A549 (cell line): ENCODE measurements at regions of chr9 and their contacts with region 1.

Region 1: GRCh38 chr9:123349691-123350480 is 6.1 kb upstream of the CRB2 start:
- DNase-seq: peak; percentile 52 to 88
- ATAC-seq: peak; percentile 60 to 82
- H3K4me3 ChIP-seq: no peak overlapping the region
- H3K27ac ChIP-seq: no peak overlapping the region
- H3K4me1 ChIP-seq: peaks cover 3% of the 10 kb centered on the region; the same call in 2 of the 3 replicates
- CTCF ChIP-seq: peak; percentile 92
- EP300 ChIP-seq: no peak
- POLR2A ChIP-seq: no peak
- RAD21 ChIP-seq: peak; percentile 96 to 99

Region 2: DNA sequence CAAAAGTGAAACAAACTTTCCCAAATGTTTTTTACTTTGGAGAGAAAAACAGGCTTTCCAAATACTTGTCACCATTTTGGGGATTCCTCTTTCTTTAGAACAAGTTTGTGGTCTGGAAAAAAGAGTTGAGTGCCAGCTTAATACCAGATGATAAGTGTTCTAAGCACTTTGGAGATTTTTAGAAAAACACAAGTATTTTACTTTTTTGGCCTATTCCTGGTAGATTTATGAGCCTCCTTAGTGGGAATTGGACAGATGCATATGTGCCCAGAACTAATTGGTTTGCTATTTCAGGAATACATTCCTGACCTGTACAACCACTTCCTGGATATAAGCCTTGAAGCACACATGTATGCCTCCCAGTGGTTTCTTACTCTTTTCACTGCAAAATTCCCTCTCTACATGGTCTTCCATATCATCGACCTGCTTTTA is 275.9 kb before region 1 on chr9:
- CTCF ChIA-PET with region 1: interaction called, 120 read pairs
- POLR2A ChIA-PET with region 1: no interaction called
- DNase-seq: no peak
- ATAC-seq: no peak
- H3K4me3 ChIP-seq: no peak overlapping the region
- H3K27ac ChIP-seq: no peak overlapping the region
- H3K4me1 ChIP-seq: no peaks in the 10 kb centered on the region
- CTCF ChIP-seq: no peak
- EP300 ChIP-seq: no peak
- POLR2A ChIP-seq: no peak
- RAD21 ChIP-seq: no peak

Region 3: GRCh38 chr9:123102375-123103110 is 247.3 kb before region 1 on chr9:
- CTCF ChIA-PET with region 1: interaction called, 88 read pairs
- POLR2A ChIA-PET with region 1: no interaction called
- DNase-seq: no peak
- ATAC-seq: peak in 1 of 2 experiments; percentile 50; a peak in 3 of 6 replicates
- H3K4me3 ChIP-seq: no peak overlapping the region
- H3K27ac ChIP-seq: no peak overlapping the region
- H3K4me1 ChIP-seq: peaks cover 16% of the 10 kb centered on the region; the same call in 2 of the 3 replicates
- CTCF ChIP-seq: no peak; the same call in 2 of the 3 replicates
- EP300 ChIP-seq: no peak
- POLR2A ChIP-seq: no peak
- RAD21 ChIP-seq: peak; percentile 27 to 34; a peak in 1 of 5 replicates

Region 4: GRCh38 chr9:123329329-123329955 is 20.4 kb before region 1 on chr9:
- CTCF ChIA-PET with region 1: interaction called, 84 read pairs
- POLR2A ChIA-PET with region 1: no interaction called
- DNase-seq: no peak
- ATAC-seq: no peak
- H3K4me3 ChIP-seq: no peak overlapping the region
- H3K27ac ChIP-seq: no peak overlapping the region
- H3K4me1 ChIP-seq: no peaks in the 10 kb centered on the region
- CTCF ChIP-seq: no peak
- EP300 ChIP-seq: no peak
- POLR2A ChIP-seq: no peak
- RAD21 ChIP-seq: no peak

Region 5: DNA sequence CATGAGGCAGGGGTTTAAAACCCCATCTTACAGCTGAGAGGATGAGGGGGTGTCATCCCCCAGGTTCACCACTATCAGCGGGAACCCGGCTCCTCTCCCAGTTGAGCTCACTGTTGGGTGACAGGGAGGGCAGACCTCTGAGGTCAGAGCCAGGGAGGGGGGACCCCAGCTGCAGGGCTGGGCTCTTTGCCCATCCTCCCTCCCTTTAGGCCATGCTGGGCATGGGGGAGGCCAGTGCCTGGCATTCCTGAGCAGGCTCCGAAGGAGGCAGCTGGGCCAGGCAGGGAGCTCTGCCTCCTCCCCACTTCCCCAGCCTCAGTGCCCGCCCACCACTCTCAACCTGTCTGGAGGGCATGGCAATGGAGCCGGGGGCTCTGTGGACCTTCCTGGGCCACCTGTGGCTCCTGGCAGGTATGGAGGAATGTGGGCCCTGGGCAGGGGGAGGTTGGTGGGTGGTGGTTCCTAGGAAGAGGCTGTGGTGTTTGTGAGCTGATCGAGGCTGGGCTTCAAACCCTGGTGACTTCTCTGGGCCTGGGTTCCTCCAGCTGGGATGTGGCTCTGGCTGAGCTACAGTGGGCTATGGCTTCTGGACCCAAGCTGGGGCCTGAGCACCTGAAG is 18.8 kb after region 1 on chr9:
- CTCF ChIA-PET with region 1: interaction called, 84 read pairs
- POLR2A ChIA-PET with region 1: no interaction called
- DNase-seq: no peak
- ATAC-seq: no peak
- H3K4me3 ChIP-seq: no peak overlapping the region
- H3K27ac ChIP-seq: peak overlapping the region in 1 of 2 experiments; percentile 46; a peak in 3 of 6 replicates
- H3K4me1 ChIP-seq: peaks cover 11% of the 10 kb centered on the region
- CTCF ChIP-seq: no peak
- EP300 ChIP-seq: no peak
- POLR2A ChIP-seq: no peak
- RAD21 ChIP-seq: no peak

Region 6: DNA sequence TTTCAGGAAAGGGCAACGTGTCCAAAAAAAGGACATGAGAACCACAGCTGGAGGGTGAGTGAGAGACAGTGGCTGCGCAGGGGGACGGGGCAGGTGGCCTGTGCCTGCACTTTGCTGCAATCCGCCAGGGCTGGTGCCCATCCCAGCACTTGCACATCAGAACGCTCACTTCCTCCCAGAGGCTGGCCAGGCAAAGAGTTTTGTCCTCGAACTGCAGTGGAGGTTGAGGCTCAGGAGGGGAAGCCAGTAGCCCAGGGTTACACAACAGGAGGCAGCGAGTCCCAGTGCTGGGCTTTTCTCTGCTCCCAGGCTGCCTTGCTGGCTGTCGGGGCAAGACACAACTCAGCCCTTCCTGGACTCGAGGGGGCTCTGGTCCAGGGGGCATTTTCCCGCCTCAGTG is 39.2 kb after region 1 on chr9:
- CTCF ChIA-PET with region 1: interaction called, 130 read pairs
- POLR2A ChIA-PET with region 1: no interaction called
- DNase-seq: no peak
- ATAC-seq: no peak
- H3K4me3 ChIP-seq: no peak overlapping the region
- H3K27ac ChIP-seq: no peak overlapping the region
- H3K4me1 ChIP-seq: no peaks in the 10 kb centered on the region
- CTCF ChIP-seq: no peak
- EP300 ChIP-seq: no peak
- POLR2A ChIP-seq: no peak
- RAD21 ChIP-seq: no peak

Region 7: GRCh38 chr9:123472862-123473614 is 123.2 kb after region 1 on chr9:
- CTCF ChIA-PET with region 1: no interaction called
- POLR2A ChIA-PET with region 1: no interaction called
- DNase-seq: no peak
- ATAC-seq: no peak; a peak in 1 of 6 replicates
- H3K4me3 ChIP-seq: no peak overlapping the region
- H3K27ac ChIP-seq: no peak overlapping the region
- H3K4me1 ChIP-seq: no peaks in the 10 kb centered on the region
- CTCF ChIP-seq: no peak
- EP300 ChIP-seq: no peak
- POLR2A ChIP-seq: no peak
- RAD21 ChIP-seq: no peak